Ovary (tissue), 10 donors: ENCODE measurements at regions of chr2 and their contacts with region 1.

Region 1: GRCh38 chr2:20666304-20667150 is at the start of gene GDF7:
- DNase-seq: peak in 1 of 5 donors; percentile 59
- H3K4me3 ChIP-seq: peak within 1 kb of the TSS; percentile 43
- H3K27ac ChIP-seq: no peak within 1 kb of the TSS
- H3K4me1 ChIP-seq: peaks cover 8% of the 10 kb centered on the region
- H3K27me3 ChIP-seq: peaks cover 1% of the 10 kb centered on the region
- CTCF ChIP-seq: no peak
- EP300 ChIP-seq: no peak
- POLR2A ChIP-seq: no peak
- total RNA-seq, gene GDF7: 0.11 to 1.7 (median 0.48) TPM

Region 2: DNA sequence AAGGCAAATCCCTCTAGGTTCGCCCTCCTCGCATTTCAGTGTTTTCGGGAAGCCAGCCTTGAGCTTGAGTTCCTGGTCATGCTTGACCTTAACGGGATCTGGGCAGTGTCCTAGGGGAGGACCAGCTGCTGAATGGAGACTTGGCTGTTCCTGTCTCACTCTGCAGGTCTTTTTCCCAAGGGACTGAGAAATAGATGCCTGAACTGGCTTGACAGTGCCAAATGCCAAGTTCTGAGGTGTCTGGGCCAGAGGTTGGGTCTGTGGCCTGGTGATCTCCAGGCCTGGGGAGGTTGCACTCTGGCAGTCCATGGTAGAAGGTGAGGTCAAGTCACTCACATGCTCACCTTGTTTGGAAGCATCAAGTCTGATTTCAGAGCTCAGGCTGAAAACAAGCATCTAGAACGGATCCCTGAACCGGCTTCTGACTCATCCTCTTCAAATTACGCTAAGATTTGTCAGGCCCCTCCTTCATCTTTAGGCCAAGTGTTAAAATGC is 200.1 kb before region 1 on chr2:
- intact Hi-C with region 1: no loop called
- DNase-seq: peak in 1 of 5 donors; percentile 33
- H3K4me3 ChIP-seq: no peak overlapping the region
- H3K27ac ChIP-seq: peak overlapping the region in 1 of 2 donors; percentile 33
- H3K4me1 ChIP-seq: peaks cover 6% of the 10 kb centered on the region
- H3K27me3 ChIP-seq: no peaks in the 10 kb centered on the region
- CTCF ChIP-seq: no peak
- EP300 ChIP-seq: no peak
- POLR2A ChIP-seq: no peak

Region 3: DNA sequence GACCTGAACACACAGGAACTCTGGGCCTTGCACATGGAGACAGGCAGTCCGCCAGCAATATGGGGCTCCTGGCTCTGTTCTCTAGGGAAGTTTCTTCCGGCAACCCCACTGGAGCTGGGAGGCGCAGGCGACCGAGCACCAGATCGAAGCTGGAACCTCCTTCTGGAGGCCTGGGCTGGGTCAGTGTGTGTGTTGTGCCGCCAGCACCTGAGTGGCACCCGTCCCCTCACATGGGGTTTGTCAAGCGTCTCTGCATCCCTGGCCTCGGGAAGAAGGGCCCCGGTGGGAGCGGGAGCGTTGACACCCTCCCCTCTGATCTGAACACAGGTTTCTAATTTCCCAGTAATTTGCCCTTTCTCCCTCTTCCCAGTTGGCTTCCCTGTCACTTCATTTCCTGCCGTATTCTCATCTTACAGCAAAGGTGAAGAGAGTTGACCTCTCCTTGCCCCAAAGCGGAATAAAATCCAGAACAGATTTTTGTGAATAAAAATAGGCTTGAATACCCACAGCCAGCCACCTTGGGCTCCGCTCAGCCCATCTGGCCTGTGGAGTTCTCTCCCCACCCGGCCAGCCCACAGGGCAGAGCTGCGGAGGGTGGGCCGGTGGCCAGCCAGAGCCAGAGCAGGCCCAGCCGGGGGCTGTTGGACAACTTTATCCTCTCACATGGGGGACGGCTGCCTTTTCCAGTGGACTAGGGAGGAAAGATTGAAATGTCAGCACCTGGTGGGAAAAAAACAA is 291.4 kb after region 1 on chr2:
- intact Hi-C with region 1: loop called in 3 of 4 experiments (anchors 2 to 5 kb)
- DNase-seq: no peak
- H3K4me3 ChIP-seq: no peak overlapping the region
- H3K27ac ChIP-seq: no peak overlapping the region
- H3K4me1 ChIP-seq: no peaks in the 10 kb centered on the region
- H3K27me3 ChIP-seq: no peaks in the 10 kb centered on the region
- CTCF ChIP-seq: no peak
- EP300 ChIP-seq: no peak
- POLR2A ChIP-seq: no peak

Region 4: GRCh38 chr2:20962939-20963557 is 296.5 kb after region 1 on chr2:
- intact Hi-C with region 1: loop called (anchors 2 to 5 kb)
- DNase-seq: peak; percentile 59 to 78 (median 70)
- H3K4me3 ChIP-seq: no peak overlapping the region
- H3K27ac ChIP-seq: no peak overlapping the region
- H3K4me1 ChIP-seq: no peaks in the 10 kb centered on the region
- H3K27me3 ChIP-seq: no peaks in the 10 kb centered on the region
- CTCF ChIP-seq: peak; percentile 40 to 80 (median 73)
- EP300 ChIP-seq: no peak
- POLR2A ChIP-seq: no peak

Region 5: GRCh38 chr2:21676676-21677075 is 1010.1 kb after region 1 on chr2:
- intact Hi-C with region 1: no loop called
- DNase-seq: no peak
- H3K4me3 ChIP-seq: no peak overlapping the region
- H3K27ac ChIP-seq: no peak overlapping the region
- H3K4me1 ChIP-seq: no peaks in the 10 kb centered on the region
- H3K27me3 ChIP-seq: no peaks in the 10 kb centered on the region
- CTCF ChIP-seq: no peak
- EP300 ChIP-seq: no peak
- POLR2A ChIP-seq: no peak